Calu3 (cell line): ENCODE measurements at regions of chr4 and their contacts with region 1.

Region 1: DNA sequence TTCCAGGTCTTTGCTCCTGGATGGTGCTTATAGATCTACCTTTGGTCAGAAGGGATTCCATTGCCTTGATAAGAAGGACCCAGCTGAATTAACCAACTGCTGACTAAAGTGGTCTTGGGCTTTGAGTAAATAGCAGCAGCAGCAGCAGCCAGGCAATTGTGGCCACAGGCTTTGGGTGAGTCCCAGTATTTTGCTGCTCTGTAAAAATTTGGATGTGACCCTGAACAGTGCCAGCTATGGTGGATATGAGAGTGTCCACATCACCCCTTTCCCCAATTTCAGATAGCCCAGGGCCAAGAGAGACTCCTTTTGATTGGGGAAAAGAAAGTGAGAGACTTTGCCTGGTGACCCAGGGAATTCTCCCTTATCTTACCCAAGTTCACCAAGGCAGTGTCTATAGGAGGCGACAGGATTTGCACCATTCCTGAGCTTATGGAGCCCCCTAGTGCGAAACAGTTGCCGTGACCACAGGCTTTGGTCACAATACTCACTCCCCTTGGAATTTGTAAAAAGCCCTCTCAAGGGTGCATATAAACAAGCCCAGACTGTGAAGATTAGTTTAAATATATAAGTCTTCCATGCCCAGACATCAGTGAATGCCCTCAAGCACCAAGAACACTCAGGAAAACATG is 518.0 kb downstream of the TMA16 start:
- DNase-seq: peak; percentile 39
- H3K4me3 Mint-ChIP-seq: no peak overlapping the region
- H3K27ac Mint-ChIP-seq: no peak overlapping the region
- H3K4me1 Mint-ChIP-seq: no peaks in the 10 kb centered on the region
- H3K27me3 Mint-ChIP-seq: no peaks in the 10 kb centered on the region
- CTCF ChIP-seq: peak; percentile 35

Region 2: GRCh38 chr4:163755013-163755412 is 257.5 kb before region 1 on chr4:
- CTCF ChIA-PET with region 1: no interaction called
- intact Hi-C with region 1: loop called (anchors 5 kb)
- DNase-seq: no peak
- H3K4me3 Mint-ChIP-seq: no peak overlapping the region
- H3K27ac Mint-ChIP-seq: no peak overlapping the region
- H3K4me1 Mint-ChIP-seq: no peaks in the 10 kb centered on the region
- H3K27me3 Mint-ChIP-seq: no peaks in the 10 kb centered on the region
- CTCF ChIP-seq: peak; percentile 32

Region 3: DNA sequence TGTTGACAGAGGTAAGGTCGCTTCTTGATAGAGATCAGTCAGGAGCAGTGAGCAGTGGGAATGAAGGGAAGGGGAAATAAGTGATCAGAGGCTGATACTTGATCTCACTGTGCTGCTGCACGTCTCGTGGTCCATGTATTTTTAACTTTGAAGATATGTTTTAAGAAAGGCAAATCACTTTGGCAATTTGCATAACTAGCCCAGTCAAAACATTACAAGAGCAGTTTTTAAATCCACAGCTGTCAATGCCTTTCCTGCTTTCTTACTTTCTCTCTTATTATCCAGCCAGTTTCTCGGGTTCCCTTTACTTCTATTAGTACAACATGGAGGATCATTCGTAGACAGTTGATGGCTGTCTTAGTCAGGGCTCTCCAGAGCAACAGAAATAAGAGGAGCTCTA is 45.2 kb before region 1 on chr4:
- CTCF ChIA-PET with region 1: no interaction called
- intact Hi-C with region 1: no loop called
- DNase-seq: no peak
- H3K4me3 Mint-ChIP-seq: no peak overlapping the region
- H3K27ac Mint-ChIP-seq: no peak overlapping the region
- H3K4me1 Mint-ChIP-seq: no peaks in the 10 kb centered on the region
- H3K27me3 Mint-ChIP-seq: no peaks in the 10 kb centered on the region
- CTCF ChIP-seq: no peak

Region 4: GRCh38 chr4:164136180-164136616 is 123.7 kb after region 1 on chr4:
- CTCF ChIA-PET with region 1: no interaction called
- intact Hi-C with region 1: no loop called
- DNase-seq: peak; percentile 12
- H3K4me3 Mint-ChIP-seq: no peak overlapping the region
- H3K27ac Mint-ChIP-seq: peak overlapping the region; percentile 86
- H3K4me1 Mint-ChIP-seq: peaks cover 9% of the 10 kb centered on the region
- H3K27me3 Mint-ChIP-seq: no peaks in the 10 kb centered on the region
- CTCF ChIP-seq: no peak

Region 5: DNA sequence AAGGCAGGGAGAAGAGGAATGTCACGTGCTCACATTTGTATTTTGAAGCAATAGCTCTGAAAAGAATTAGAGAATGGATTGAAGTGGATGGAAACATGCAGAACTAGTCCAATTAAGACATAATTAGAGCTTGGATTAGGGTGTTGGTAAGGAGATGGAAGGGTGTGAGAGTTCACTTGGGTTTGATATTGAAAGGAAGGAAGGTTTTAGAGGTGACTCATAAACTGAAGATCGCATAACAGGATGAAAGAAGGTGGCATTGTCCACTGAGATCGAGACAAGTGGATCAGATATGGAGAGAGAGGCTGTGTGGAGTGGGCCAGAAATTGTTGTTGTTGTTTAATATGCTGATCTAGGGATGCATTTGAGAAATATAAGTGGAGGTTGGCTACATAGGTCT is 497.4 kb after region 1 on chr4:
- CTCF ChIA-PET with region 1: no interaction called
- intact Hi-C with region 1: no loop called
- DNase-seq: no peak
- H3K4me3 Mint-ChIP-seq: no peak overlapping the region
- H3K27ac Mint-ChIP-seq: no peak overlapping the region
- H3K4me1 Mint-ChIP-seq: no peaks in the 10 kb centered on the region
- H3K27me3 Mint-ChIP-seq: no peaks in the 10 kb centered on the region
- CTCF ChIP-seq: no peak

Region 6: DNA sequence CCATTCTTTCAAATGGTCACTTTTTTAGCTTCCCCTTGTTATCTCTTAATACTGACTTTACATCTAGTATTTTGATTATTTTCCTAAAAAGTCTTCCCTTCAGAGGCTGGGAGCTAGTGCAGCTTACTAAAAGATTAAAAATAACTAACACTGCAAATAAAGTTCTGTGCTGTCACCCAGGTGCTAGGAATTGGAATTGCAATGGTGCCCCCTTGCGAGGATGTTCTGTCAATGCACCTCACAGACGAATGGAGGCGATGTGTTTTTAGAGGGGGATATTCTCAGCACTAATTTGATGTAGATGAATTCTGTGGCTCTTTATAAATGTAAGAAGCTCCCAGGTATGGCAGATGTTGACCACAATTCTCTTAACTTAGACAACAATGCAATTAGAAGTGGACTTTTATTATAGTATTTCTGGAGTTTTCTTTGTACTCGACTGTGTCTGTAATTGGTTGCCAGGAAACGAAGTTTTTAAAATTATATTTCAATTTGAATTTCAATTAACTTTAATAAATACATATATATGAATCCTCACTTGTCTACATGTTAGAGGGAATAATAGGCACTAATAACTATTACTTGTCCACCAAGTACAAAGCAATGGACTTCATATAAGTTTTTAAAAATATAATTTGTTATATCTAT is 719.4 kb after region 1 on chr4:
- CTCF ChIA-PET with region 1: no interaction called
- intact Hi-C with region 1: loop called (anchors 5 kb)
- DNase-seq: peak; percentile 65
- H3K4me3 Mint-ChIP-seq: no peak overlapping the region
- H3K27ac Mint-ChIP-seq: no peak overlapping the region
- H3K4me1 Mint-ChIP-seq: no peaks in the 10 kb centered on the region
- H3K27me3 Mint-ChIP-seq: no peaks in the 10 kb centered on the region
- CTCF ChIP-seq: peak; percentile 53